CD8-positive, alpha-beta T cell (primary cell): ENCODE measurements at regions of chr5 and their contacts with region 1.

Region 1: GRCh38 chr5:35785601-35786085 is 71.0 kb upstream of the IL7R start:
- DNase-seq: peak in 4 of 9 experiments; percentile 25 to 61 (median 35)
- ATAC-seq: peak; percentile 69
- H3K4me3 ChIP-seq: no peak overlapping the region
- H3K4me3 Mint-ChIP-seq: peak overlapping the region; percentile 6
- H3K27ac ChIP-seq: no peak overlapping the region
- H3K27ac Mint-ChIP-seq: peak overlapping the region; percentile 69
- H3K4me1 ChIP-seq: peaks cover 56% of the 10 kb centered on the region
- H3K4me1 Mint-ChIP-seq: peaks cover 80% of the 10 kb centered on the region
- H3K27me3 ChIP-seq: no peaks in the 10 kb centered on the region
- H3K27me3 Mint-ChIP-seq: no peaks in the 10 kb centered on the region
- CTCF ChIP-seq: no peak

Region 2: GRCh38 chr5:35543408-35543807 is 242.2 kb before region 1 on chr5:
- CTCF ChIA-PET with region 1: no interaction called
- POLR2A ChIA-PET with region 1: no interaction called
- intact Hi-C with region 1: no loop called
- DNase-seq: no peak
- ATAC-seq: no peak
- H3K4me3 ChIP-seq: no peak overlapping the region
- H3K4me3 Mint-ChIP-seq: no peak overlapping the region
- H3K27ac ChIP-seq: no peak overlapping the region
- H3K27ac Mint-ChIP-seq: no peak overlapping the region
- H3K4me1 ChIP-seq: no peaks in the 10 kb centered on the region
- H3K4me1 Mint-ChIP-seq: peaks cover 2% of the 10 kb centered on the region
- H3K27me3 ChIP-seq: no peaks in the 10 kb centered on the region
- H3K27me3 Mint-ChIP-seq: peaks cover 15% of the 10 kb centered on the region
- CTCF ChIP-seq: no peak

Region 3: GRCh38 chr5:35762368-35762767 is 23.3 kb before region 1 on chr5:
- CTCF ChIA-PET with region 1: no interaction called
- POLR2A ChIA-PET with region 1: no interaction called
- intact Hi-C with region 1: no loop called
- DNase-seq: no peak
- ATAC-seq: no peak
- H3K4me3 ChIP-seq: no peak overlapping the region
- H3K4me3 Mint-ChIP-seq: no peak overlapping the region
- H3K27ac ChIP-seq: no peak overlapping the region
- H3K27ac Mint-ChIP-seq: peak overlapping the region; percentile 13
- H3K4me1 ChIP-seq: peaks cover 18% of the 10 kb centered on the region
- H3K4me1 Mint-ChIP-seq: peaks cover 43% of the 10 kb centered on the region
- H3K27me3 ChIP-seq: no peaks in the 10 kb centered on the region
- H3K27me3 Mint-ChIP-seq: no peaks in the 10 kb centered on the region
- CTCF ChIP-seq: no peak

Region 4: DNA sequence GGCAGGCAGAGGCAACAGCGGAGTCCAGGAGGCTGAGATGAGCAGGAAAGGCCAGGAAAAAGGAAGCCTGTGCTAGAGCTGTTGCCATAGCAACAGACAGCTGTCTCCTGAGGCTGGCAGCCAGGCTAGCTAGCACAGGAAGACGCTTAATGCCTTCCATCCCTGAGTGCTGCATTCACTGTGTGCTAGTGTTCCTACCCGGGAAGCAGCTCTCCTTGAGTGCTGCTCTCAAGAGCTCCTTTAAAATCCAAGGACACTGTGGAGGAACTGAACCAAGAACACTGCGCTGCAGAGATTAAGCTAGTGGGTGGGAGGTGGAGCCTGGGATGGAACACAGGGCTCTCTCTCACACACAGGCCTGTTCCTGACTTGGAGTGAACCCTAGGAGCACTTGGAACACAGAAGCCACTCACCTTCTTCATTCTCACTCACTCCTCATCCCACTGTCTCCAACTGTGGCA is 17.6 kb after region 1 on chr5:
- CTCF ChIA-PET with region 1: interaction called, 6 read pairs
- POLR2A ChIA-PET with region 1: interaction called, 11 read pairs
- intact Hi-C with region 1: loop called in 1 of 2 experiments (anchors 2 kb)
- DNase-seq: peak in 2 of 9 experiments; percentile 47 to 69
- ATAC-seq: peak; percentile 48
- H3K4me3 ChIP-seq: no peak overlapping the region
- H3K4me3 Mint-ChIP-seq: peak overlapping the region; percentile 6
- H3K27ac ChIP-seq: no peak overlapping the region
- H3K27ac Mint-ChIP-seq: peak overlapping the region; percentile 75
- H3K4me1 ChIP-seq: peaks cover 37% of the 10 kb centered on the region
- H3K4me1 Mint-ChIP-seq: peaks cover 64% of the 10 kb centered on the region
- H3K27me3 ChIP-seq: no peaks in the 10 kb centered on the region
- H3K27me3 Mint-ChIP-seq: no peaks in the 10 kb centered on the region
- CTCF ChIP-seq: no peak

Region 5: DNA sequence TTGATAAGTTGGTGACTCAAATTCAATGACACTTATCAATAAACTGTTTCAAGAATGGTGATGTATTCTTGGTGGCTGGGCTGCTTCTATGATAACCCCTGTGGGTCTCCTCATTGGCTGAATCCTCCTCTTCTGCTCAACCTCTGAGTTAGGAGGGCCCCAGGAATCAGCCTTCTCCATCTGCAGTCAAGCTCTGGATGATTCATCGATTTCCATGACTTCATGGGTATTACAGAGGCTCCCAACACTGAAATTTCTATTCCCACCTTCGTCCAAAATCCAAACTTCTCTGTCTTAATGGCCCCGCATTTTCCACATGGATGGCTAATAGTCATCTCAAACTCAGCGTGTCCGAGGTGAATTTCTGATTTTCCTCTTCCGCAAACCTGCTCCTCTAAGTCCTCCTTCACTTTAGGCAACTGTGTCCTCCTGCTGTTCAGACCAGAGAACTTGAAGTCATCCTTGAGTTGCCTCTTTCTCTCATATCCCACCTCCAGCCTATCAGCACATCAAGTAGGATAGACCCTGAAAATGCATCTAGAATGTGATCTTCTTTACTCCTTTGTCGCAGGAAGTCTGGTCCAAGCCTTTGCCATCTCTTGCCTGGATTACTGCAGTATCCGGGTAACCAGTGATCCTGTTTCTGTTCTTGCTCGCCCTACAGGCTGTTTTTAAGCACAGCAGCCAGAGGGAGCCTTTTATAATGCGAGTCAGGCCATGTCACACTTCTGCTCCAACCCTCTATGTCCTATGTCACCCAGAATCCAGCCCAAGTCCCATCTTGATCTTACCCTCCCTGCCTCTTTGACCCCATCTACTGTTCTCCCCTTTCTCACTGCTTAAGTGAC is 29.7 kb after region 1 on chr5:
- CTCF ChIA-PET with region 1: interaction called, 63 read pairs
- POLR2A ChIA-PET with region 1: interaction called, 7 read pairs
- intact Hi-C with region 1: loop called in 1 of 2 experiments (anchors 2 kb)
- DNase-seq: peak in 3 of 9 experiments; percentile 30 to 62 (median 52)
- ATAC-seq: no peak
- H3K4me3 ChIP-seq: no peak overlapping the region
- H3K4me3 Mint-ChIP-seq: no peak overlapping the region
- H3K27ac ChIP-seq: peak overlapping the region in 1 of 2 experiments; percentile 15
- H3K27ac Mint-ChIP-seq: no peak overlapping the region
- H3K4me1 ChIP-seq: peaks cover 69% of the 10 kb centered on the region
- H3K4me1 Mint-ChIP-seq: peaks cover 53% of the 10 kb centered on the region
- H3K27me3 ChIP-seq: no peaks in the 10 kb centered on the region
- H3K27me3 Mint-ChIP-seq: no peaks in the 10 kb centered on the region
- CTCF ChIP-seq: peak; percentile 31

Region 6: DNA sequence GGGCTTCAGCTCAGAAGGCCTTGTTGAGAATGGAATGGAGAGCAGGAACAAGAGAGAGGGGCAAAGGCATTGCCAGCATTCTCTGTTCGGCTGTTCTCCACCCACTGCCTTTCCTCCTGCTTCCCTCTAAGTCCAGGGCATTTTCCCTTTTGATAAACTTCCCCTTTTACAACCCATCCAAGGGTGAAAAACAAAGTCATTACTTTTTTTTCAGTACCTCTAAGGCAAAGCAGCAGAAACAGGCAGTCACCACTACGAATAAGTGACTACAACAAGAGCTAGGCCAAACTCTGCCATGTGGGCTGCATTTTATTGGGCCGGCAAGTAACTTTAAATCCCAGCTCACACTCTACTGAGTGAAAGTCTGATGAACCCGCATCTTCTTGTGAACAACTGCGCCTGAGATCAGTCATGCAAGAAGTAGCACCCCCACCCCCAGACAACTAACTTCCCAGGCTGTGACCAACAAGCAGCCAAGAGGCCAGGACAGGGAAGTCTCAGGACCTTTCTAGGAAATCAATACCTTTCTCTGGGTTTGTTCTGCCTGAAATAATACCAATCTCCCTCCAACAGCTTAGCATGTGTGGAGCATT is 84.1 kb after region 1 on chr5:
- CTCF ChIA-PET with region 1: interaction called, 41 read pairs
- POLR2A ChIA-PET with region 1: interaction called, 28 read pairs
- intact Hi-C with region 1: no loop called
- DNase-seq: no peak
- ATAC-seq: peak; percentile 30
- H3K4me3 ChIP-seq: no peak overlapping the region
- H3K4me3 Mint-ChIP-seq: no peak overlapping the region
- H3K27ac ChIP-seq: peak overlapping the region in 1 of 2 experiments; percentile 17
- H3K27ac Mint-ChIP-seq: peak overlapping the region; percentile 85
- H3K4me1 ChIP-seq: peaks cover 61% of the 10 kb centered on the region
- H3K4me1 Mint-ChIP-seq: peaks cover 87% of the 10 kb centered on the region
- H3K27me3 ChIP-seq: no peaks in the 10 kb centered on the region
- H3K27me3 Mint-ChIP-seq: no peaks in the 10 kb centered on the region
- CTCF ChIP-seq: no peak

Region 7: DNA sequence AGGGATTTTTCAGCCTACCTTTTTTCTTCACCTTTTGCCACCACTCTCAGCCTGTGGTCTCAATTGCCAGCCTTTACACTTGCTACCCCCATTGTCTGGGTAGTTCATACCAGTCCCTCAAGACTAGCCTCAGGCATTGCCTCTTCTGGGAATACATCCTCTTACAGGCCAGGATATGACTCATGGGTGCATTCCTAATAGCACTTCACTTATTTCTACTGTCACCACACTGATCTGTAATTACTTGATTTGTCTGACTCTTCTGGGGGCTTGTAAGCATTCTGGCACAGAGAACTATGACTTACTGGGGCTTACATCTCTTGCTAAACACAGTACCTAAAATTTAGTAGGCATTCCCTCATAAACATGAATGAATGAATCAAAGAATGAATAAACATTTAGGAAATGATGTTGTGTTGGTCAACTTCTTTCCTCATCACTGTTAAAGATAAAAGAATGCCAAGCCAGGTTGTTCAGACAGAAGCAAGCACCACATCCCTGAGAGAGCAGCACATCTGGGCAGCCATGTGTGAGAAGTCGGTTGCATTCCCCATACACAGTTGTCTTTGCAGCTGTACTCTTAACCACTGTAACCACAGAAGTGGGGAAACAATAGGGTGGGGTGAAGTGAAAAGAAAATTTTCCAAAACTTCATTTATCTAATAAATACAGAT is 98.6 kb after region 1 on chr5:
- CTCF ChIA-PET with region 1: interaction called, 3 read pairs
- POLR2A ChIA-PET with region 1: interaction called, 46 read pairs
- intact Hi-C with region 1: no loop called
- DNase-seq: peak in 2 of 9 experiments; percentile 35 to 57
- ATAC-seq: peak; percentile 47
- H3K4me3 ChIP-seq: no peak overlapping the region
- H3K4me3 Mint-ChIP-seq: peak overlapping the region; percentile 3
- H3K27ac ChIP-seq: peak overlapping the region in 1 of 2 experiments; percentile 44
- H3K27ac Mint-ChIP-seq: peak overlapping the region; percentile 89
- H3K4me1 ChIP-seq: peaks cover 26% of the 10 kb centered on the region
- H3K4me1 Mint-ChIP-seq: peaks cover 47% of the 10 kb centered on the region
- H3K27me3 ChIP-seq: no peaks in the 10 kb centered on the region
- H3K27me3 Mint-ChIP-seq: no peaks in the 10 kb centered on the region
- CTCF ChIP-seq: no peak